B cell (primary cell): ENCODE measurements at regions of chr6 and their contacts with region 1.

Region 1: GRCh38 chr6:69835414-69836179 is 30.8 kb upstream of the COL19A1 start:
- DNase-seq: peak; percentile 74
- ATAC-seq: peak; percentile 70
- H3K4me3 ChIP-seq: no peak overlapping the region
- H3K4me3 Mint-ChIP-seq: peak overlapping the region; percentile 40
- H3K27ac ChIP-seq: peak overlapping the region in 1 of 2 donors; percentile 53
- H3K27ac Mint-ChIP-seq: peak overlapping the region; percentile 12
- H3K4me1 ChIP-seq: peaks cover 15 to 21% of the 10 kb centered on the region in 2 donors
- H3K4me1 Mint-ChIP-seq: peaks cover 21% of the 10 kb centered on the region
- H3K27me3 ChIP-seq: no peaks in the 10 kb centered on the region
- H3K27me3 Mint-ChIP-seq: no peaks in the 10 kb centered on the region
- CTCF ChIP-seq: peak; percentile 96

Region 2: GRCh38 chr6:68400396-68400795 is 1435.2 kb before region 1 on chr6:
- CTCF ChIA-PET with region 1: no interaction called
- POLR2A ChIA-PET with region 1: no interaction called
- intact Hi-C with region 1: no loop called
- DNase-seq: no peak
- ATAC-seq: no peak
- H3K4me3 ChIP-seq: no peak overlapping the region
- H3K4me3 Mint-ChIP-seq: no peak overlapping the region
- H3K27ac ChIP-seq: no peak overlapping the region
- H3K27ac Mint-ChIP-seq: no peak overlapping the region
- H3K4me1 ChIP-seq: no peaks in the 10 kb centered on the region
- H3K4me1 Mint-ChIP-seq: no peaks in the 10 kb centered on the region
- H3K27me3 ChIP-seq: no peaks in the 10 kb centered on the region
- H3K27me3 Mint-ChIP-seq: no peaks in the 10 kb centered on the region
- CTCF ChIP-seq: no peak

Region 3: DNA sequence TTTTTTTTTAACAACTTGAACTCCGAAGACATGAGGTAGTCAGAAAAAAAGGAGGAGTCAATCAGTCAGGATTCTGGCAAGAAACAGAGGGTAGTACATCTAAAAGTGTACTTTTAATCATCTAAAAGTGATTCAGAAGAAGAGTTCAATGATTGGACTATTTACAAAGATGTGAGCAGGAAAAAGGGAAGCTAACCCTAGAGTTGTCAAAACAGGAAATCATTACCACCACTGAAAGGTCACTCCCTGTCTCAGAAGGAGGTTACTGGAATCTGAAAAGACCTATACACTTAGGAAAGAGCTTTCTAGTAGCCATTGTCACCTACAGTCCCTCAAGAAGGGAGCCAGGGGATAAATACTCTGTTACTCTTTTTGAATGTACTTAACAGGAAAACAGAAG is 22.1 kb before region 1 on chr6:
- CTCF ChIA-PET with region 1: interaction called, 5 read pairs
- POLR2A ChIA-PET with region 1: interaction called, 3 read pairs
- intact Hi-C with region 1: loop called (anchors 1 kb)
- DNase-seq: peak; percentile 55
- ATAC-seq: peak; percentile 68
- H3K4me3 ChIP-seq: peak overlapping the region in 2 of 5 experiments; percentile 9 to 42
- H3K4me3 Mint-ChIP-seq: peak overlapping the region; percentile 64
- H3K27ac ChIP-seq: peak overlapping the region; percentile 85 to 89
- H3K27ac Mint-ChIP-seq: peak overlapping the region; percentile 85
- H3K4me1 ChIP-seq: peaks cover 51 to 62% of the 10 kb centered on the region in 2 donors
- H3K4me1 Mint-ChIP-seq: peaks cover 72% of the 10 kb centered on the region
- H3K27me3 ChIP-seq: no peaks in the 10 kb centered on the region
- H3K27me3 Mint-ChIP-seq: no peaks in the 10 kb centered on the region
- CTCF ChIP-seq: no peak

Region 4: DNA sequence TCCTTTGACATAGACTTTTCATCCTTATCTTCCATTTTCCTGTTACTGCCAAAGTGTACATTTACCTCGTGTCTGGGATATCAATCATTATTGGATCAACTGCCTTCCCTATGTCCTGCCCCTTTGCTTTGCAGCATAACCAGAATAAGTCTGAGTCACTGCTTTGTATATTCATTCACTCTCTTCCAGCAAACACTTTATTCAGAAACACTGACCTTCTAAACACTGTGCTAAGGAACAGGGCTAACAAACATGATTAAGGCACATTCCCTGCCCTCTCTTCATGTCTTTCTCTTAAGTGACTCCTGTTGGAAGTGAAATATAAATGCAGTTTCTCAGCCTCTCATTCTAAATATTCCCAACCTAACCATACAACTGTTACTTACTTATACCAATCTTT is 97.6 kb after region 1 on chr6:
- CTCF ChIA-PET with region 1: interaction called, 3 read pairs
- POLR2A ChIA-PET with region 1: no interaction called
- intact Hi-C with region 1: loop called (anchors 5 kb)
- DNase-seq: no peak
- ATAC-seq: no peak
- H3K4me3 ChIP-seq: no peak overlapping the region
- H3K4me3 Mint-ChIP-seq: no peak overlapping the region
- H3K27ac ChIP-seq: peak overlapping the region in 1 of 2 donors; percentile 50
- H3K27ac Mint-ChIP-seq: peak overlapping the region; percentile 22
- H3K4me1 ChIP-seq: peaks cover 0 to 9% of the 10 kb centered on the region in 2 donors
- H3K4me1 Mint-ChIP-seq: peaks cover 18% of the 10 kb centered on the region
- H3K27me3 ChIP-seq: no peaks in the 10 kb centered on the region
- H3K27me3 Mint-ChIP-seq: no peaks in the 10 kb centered on the region
- CTCF ChIP-seq: no peak

Region 5: GRCh38 chr6:69985180-69985579 is 149.6 kb after region 1 on chr6:
- CTCF ChIA-PET with region 1: no interaction called
- POLR2A ChIA-PET with region 1: no interaction called
- intact Hi-C with region 1: loop called (anchors 5 kb)
- DNase-seq: no peak
- ATAC-seq: peak; percentile 21
- H3K4me3 ChIP-seq: no peak overlapping the region
- H3K4me3 Mint-ChIP-seq: no peak overlapping the region
- H3K27ac ChIP-seq: peak overlapping the region in 1 of 2 donors; percentile 58
- H3K27ac Mint-ChIP-seq: peak overlapping the region; percentile 32
- H3K4me1 ChIP-seq: peaks cover 8 to 25% of the 10 kb centered on the region in 2 donors
- H3K4me1 Mint-ChIP-seq: peaks cover 38% of the 10 kb centered on the region
- H3K27me3 ChIP-seq: no peaks in the 10 kb centered on the region
- H3K27me3 Mint-ChIP-seq: no peaks in the 10 kb centered on the region
- CTCF ChIP-seq: no peak

Region 6: GRCh38 chr6:70270287-70271005 is 434.8 kb after region 1 on chr6:
- CTCF ChIA-PET with region 1: no interaction called
- POLR2A ChIA-PET with region 1: no interaction called
- intact Hi-C with region 1: no loop called
- DNase-seq: no peak
- ATAC-seq: no peak
- H3K4me3 ChIP-seq: no peak overlapping the region
- H3K4me3 Mint-ChIP-seq: no peak overlapping the region
- H3K27ac ChIP-seq: no peak overlapping the region
- H3K27ac Mint-ChIP-seq: no peak overlapping the region
- H3K4me1 ChIP-seq: no peaks in the 10 kb centered on the region
- H3K4me1 Mint-ChIP-seq: no peaks in the 10 kb centered on the region
- H3K27me3 ChIP-seq: peaks cover 0 to 4% (median 1%) of the 10 kb centered on the region in 4 experiments
- H3K27me3 Mint-ChIP-seq: peaks cover 13% of the 10 kb centered on the region
- CTCF ChIP-seq: no peak